ENCODE measurements at regions of chr15 and their contacts with region 1.

Region 1: DNA sequence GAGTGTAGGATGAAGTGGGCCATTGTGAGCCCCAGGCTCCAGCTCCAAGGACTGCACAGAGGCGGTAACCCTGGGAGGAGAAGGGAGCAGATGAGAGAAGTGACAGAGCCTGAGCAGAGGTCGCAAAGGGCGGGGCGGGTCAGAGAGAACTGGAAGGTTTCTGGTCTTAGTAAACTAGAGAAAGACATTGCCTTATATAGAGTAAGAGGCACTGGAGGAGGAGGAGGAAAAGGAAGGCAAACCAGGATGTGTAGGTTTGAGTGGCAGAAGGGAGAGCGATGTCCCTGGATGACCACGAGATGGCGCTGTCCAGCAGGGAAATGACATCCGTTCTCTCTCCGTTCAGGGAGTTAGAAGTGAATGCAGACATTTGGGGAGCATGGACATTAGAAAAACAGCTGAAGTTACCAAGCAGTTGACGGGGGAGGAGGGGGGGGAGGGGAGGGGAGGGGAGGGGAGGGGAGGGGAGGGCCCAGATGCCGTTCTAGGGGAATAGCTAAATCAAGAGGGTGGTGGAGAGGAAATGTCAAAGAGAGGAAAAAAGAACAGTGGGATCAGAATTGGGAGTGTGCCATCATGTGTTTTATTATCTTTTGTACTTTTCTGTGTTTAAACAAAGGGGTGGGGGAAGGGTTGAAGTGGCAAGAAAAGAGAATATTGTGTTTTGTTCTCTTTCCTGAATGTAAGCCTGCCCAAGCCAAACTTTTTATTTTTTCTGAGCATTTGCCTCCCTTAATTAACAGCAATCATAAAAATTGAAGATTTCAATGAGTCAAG is 48.8 kb downstream of the STARD5 start:
- DNase-seq: peak; percentile 88
- ATAC-seq: peak; percentile 90
- H3K4me3 Mint-ChIP-seq: peak overlapping the region; percentile 33
- H3K27ac Mint-ChIP-seq: peak overlapping the region; percentile 53
- H3K4me1 Mint-ChIP-seq: peaks cover 46% of the 10 kb centered on the region
- H3K27me3 Mint-ChIP-seq: no peaks in the 10 kb centered on the region

Region 2: DNA sequence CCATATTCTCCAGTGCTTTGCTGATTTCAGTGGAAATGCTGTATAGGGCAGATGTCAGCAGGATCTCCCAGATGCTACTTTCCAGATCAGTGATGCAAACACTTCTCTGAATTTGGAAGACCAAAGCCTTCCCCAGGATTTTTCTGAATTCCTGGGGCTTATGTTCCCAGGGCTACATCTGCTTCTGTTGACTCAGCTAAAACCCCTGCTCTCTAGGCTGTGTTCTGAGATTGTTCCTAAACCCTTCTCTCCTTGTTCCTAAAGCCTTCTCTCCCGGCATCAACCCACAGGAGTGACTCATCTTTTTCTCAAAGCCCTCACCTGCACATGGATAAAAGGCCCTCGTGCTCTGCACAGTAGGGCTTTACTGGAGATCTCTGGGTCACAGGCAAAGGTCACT is 1086.9 kb before region 1 on chr15:
- CTCF ChIA-PET with region 1: no interaction called
- POLR2A ChIA-PET with region 1: no interaction called
- intact Hi-C with region 1: no loop called
- DNase-seq: no peak
- ATAC-seq: no peak
- H3K4me3 Mint-ChIP-seq: no peak overlapping the region
- H3K27ac Mint-ChIP-seq: no peak overlapping the region
- H3K4me1 Mint-ChIP-seq: no peaks in the 10 kb centered on the region
- H3K27me3 Mint-ChIP-seq: no peaks in the 10 kb centered on the region

Region 3: GRCh38 chr15:81296673-81297072 is 21.6 kb after region 1 on chr15:
- CTCF ChIA-PET with region 1: interaction called, 70 read pairs
- POLR2A ChIA-PET with region 1: interaction called, 3 read pairs
- intact Hi-C with region 1: loop called (anchors 1 to 2 kb)
- DNase-seq: peak; percentile 86
- ATAC-seq: peak; percentile 54
- H3K4me3 Mint-ChIP-seq: peak overlapping the region; percentile 94
- H3K27ac Mint-ChIP-seq: peak overlapping the region; percentile 98
- H3K4me1 Mint-ChIP-seq: peaks cover 62% of the 10 kb centered on the region
- H3K27me3 Mint-ChIP-seq: no peaks in the 10 kb centered on the region

Region 4: GRCh38 chr15:81312790-81313543 is 37.8 kb after region 1 on chr15:
- CTCF ChIA-PET with region 1: interaction called, 16 read pairs
- POLR2A ChIA-PET with region 1: interaction called, 4 read pairs
- intact Hi-C with region 1: no loop called
- DNase-seq: no peak
- ATAC-seq: no peak
- H3K4me3 Mint-ChIP-seq: no peak overlapping the region
- H3K27ac Mint-ChIP-seq: peak overlapping the region; percentile 44
- H3K4me1 Mint-ChIP-seq: peaks cover 67% of the 10 kb centered on the region
- H3K27me3 Mint-ChIP-seq: no peaks in the 10 kb centered on the region

Region 5: GRCh38 chr15:81336568-81336967 is 61.4 kb after region 1 on chr15:
- CTCF ChIA-PET with region 1: interaction called, 63 read pairs
- POLR2A ChIA-PET with region 1: no interaction called
- intact Hi-C with region 1: loop called (anchors 1 kb)
- DNase-seq: peak; percentile 52
- ATAC-seq: peak; percentile 51
- H3K4me3 Mint-ChIP-seq: no peak overlapping the region
- H3K27ac Mint-ChIP-seq: no peak overlapping the region
- H3K4me1 Mint-ChIP-seq: peaks cover 7% of the 10 kb centered on the region
- H3K27me3 Mint-ChIP-seq: no peaks in the 10 kb centered on the region

Region 6: GRCh38 chr15:81400640-81401236 is 125.6 kb after region 1 on chr15:
- CTCF ChIA-PET with region 1: interaction called, 70 read pairs
- POLR2A ChIA-PET with region 1: no interaction called
- intact Hi-C with region 1: loop called (anchors 1 kb)
- DNase-seq: no peak
- ATAC-seq: peak; percentile 44
- H3K4me3 Mint-ChIP-seq: no peak overlapping the region
- H3K27ac Mint-ChIP-seq: no peak overlapping the region
- H3K4me1 Mint-ChIP-seq: peaks cover 3% of the 10 kb centered on the region
- H3K27me3 Mint-ChIP-seq: no peaks in the 10 kb centered on the region

Measured in activated CD4-positive, alpha-beta T cell treated with anti-CD3 and anti-CD28 coated beads for 36 hours (primary cell).